Motor neuron (in vitro differentiated cells): ENCODE measurements at regions of chr12 and their contacts with region 1.

Region 1: GRCh38 chr12:111529424-111530368 is 69.4 kb downstream of the ATXN2 start:
- ATAC-seq: peak in 7 of 8 experiments; percentile 33 to 86 (median 65)
- H3K4me3 ChIP-seq: no peak overlapping the region
- H3K27ac ChIP-seq: no peak overlapping the region
- H3K4me1 ChIP-seq: no peaks in the 10 kb centered on the region

Region 2: GRCh38 chr12:110555577-110556406 is 973.9 kb before region 1 on chr12:
- in situ Hi-C with region 1: no loop called
- ATAC-seq: peak in 3 of 8 experiments; percentile 71 to 90 (median 80)
- H3K4me3 ChIP-seq: no peak overlapping the region
- H3K27ac ChIP-seq: no peak overlapping the region
- H3K4me1 ChIP-seq: peaks cover 0 to 7% of the 10 kb centered on the region in 2 donors

Region 3: GRCh38 chr12:111396726-111397445 is 132.8 kb before region 1 on chr12:
- in situ Hi-C with region 1: loop called in 1 of 9 experiments (anchors 25 kb)
- ATAC-seq: peak; percentile 90 to 96 (median 92)
- H3K4me3 ChIP-seq: no peak overlapping the region
- H3K27ac ChIP-seq: no peak overlapping the region
- H3K4me1 ChIP-seq: no peaks in the 10 kb centered on the region

Region 4: GRCh38 chr12:111578274-111578970 is 48.7 kb after region 1 on chr12:
- in situ Hi-C with region 1: no loop called
- ATAC-seq: peak in 4 of 8 experiments; percentile 41 to 91 (median 66)
- H3K4me3 ChIP-seq: no peak overlapping the region
- H3K27ac ChIP-seq: no peak overlapping the region
- H3K4me1 ChIP-seq: no peaks in the 10 kb centered on the region